Ovary (tissue), 10 donors: ENCODE measurements at regions of chr20 and their contacts with region 1.

Region 1: GRCh38 chr20:16054985-16055384 is 518.3 kb downstream of the KIF16B start:
- DNase-seq: no peak
- H3K4me3 ChIP-seq: no peak overlapping the region
- H3K27ac ChIP-seq: no peak overlapping the region
- H3K4me1 ChIP-seq: peaks cover 2% of the 10 kb centered on the region
- H3K27me3 ChIP-seq: no peaks in the 10 kb centered on the region
- CTCF ChIP-seq: no peak
- EP300 ChIP-seq: no peak
- POLR2A ChIP-seq: no peak

Region 2: DNA sequence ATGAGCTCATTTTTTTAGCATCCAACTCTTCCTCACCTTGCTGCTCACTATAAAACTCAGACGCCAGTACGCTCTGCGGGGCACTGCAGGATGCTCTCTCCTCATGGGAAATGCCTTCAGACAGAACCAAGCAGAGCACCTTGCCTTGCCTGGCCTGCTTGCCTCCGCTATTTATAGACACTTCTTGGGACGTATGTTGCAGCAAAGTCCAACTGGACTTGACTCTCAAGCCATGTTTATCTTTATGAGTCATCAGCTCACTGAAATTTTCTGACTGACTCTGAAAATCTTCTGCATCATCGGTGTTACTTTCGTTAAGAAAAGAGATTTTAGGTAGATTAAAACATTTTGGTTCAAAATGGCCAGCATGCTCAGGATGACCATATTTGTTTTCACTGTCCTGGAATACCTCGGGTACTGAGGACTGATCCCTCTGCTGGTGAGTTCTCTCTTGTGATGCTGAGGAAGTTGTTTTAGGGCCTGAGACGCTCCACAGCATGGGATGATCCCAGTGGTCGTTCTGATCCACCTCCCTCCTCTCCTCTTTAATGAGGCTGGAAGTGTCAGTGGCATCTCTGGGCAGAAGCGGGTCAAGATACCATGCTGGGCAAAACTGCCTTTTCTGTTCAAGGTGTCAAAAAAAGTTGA is 313.8 kb after region 1 on chr20:
- intact Hi-C with region 1: loop called in 1 of 4 experiments (anchors 10 kb)
- DNase-seq: no peak
- H3K4me3 ChIP-seq: no peak overlapping the region
- H3K27ac ChIP-seq: no peak overlapping the region
- H3K4me1 ChIP-seq: no peaks in the 10 kb centered on the region
- H3K27me3 ChIP-seq: no peaks in the 10 kb centered on the region
- CTCF ChIP-seq: no peak
- EP300 ChIP-seq: no peak
- POLR2A ChIP-seq: no peak